A673 (cell line): ENCODE measurements at regions of chr16 and their contacts with region 1.

Region 1: GRCh38 chr16:53561101-53561888 is 58.3 kb upstream of the AKTIP start:
- DNase-seq: no peak
- H3K4me3 ChIP-seq: no peak overlapping the region
- H3K27ac ChIP-seq: no peak overlapping the region
- H3K4me1 ChIP-seq: no peaks in the 10 kb centered on the region
- H3K27me3 ChIP-seq: no peaks in the 10 kb centered on the region
- CTCF ChIP-seq: no peak

Region 2: GRCh38 chr16:53415504-53415903 is 145.8 kb before region 1 on chr16:
- CTCF ChIA-PET with region 1: no interaction called
- POLR2A ChIA-PET with region 1: no interaction called
- intact Hi-C with region 1: no loop called
- DNase-seq: peak; percentile 65
- H3K4me3 ChIP-seq: peak overlapping the region; percentile 14
- H3K27ac ChIP-seq: no peak overlapping the region
- H3K4me1 ChIP-seq: peaks cover 20% of the 10 kb centered on the region
- H3K27me3 ChIP-seq: no peaks in the 10 kb centered on the region
- CTCF ChIP-seq: peak; percentile 35

Region 3: DNA sequence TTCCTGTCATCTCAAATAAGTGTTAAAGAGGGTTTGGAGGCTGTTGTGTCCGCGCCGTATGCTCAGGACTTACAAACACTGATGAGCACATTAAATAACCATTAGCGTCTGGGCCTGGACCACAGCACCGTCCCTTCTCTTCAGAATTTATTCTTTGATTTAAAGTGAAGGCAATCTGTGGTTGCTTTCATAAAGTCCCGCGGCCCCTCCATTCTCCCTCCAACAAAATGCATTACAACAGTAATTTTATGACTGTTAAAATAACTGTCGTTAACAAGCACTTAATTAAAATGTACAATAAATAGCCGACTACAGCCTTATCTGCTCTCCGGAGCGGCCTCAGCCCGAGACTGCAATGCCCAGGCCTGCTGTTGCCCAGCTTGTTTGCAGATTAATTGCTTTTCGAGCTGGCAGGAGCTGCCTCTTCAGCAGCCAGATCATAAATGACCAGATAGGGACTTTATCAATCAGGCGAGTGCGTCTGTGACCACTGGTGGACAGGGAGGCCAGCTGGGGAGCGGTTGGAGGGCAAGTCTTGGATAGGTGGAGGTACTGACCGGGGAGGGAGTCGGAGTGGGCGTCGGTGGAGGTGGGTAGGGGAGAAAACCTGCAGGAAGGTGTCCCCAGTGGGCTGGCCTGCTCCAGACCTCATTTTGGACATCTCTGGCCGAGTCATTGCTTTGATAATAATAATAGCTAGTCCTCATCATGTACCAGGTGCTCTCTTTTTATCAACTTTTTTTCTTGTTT is 756.0 kb after region 1 on chr16:
- CTCF ChIA-PET with region 1: no interaction called
- POLR2A ChIA-PET with region 1: interaction called, 11 read pairs
- intact Hi-C with region 1: no loop called
- DNase-seq: no peak
- H3K4me3 ChIP-seq: no peak overlapping the region
- H3K27ac ChIP-seq: no peak overlapping the region
- H3K4me1 ChIP-seq: no peaks in the 10 kb centered on the region
- H3K27me3 ChIP-seq: no peaks in the 10 kb centered on the region
- CTCF ChIP-seq: no peak